ENCODE measurements at regions of chr12 and their contacts with region 1.

Region 1: GRCh38 chr12:14167005-14167628 is 185.7 kb upstream of the GRIN2B start:
- DNase-seq: peak; percentile 36
- ATAC-seq: no peak
- H3K4me3 ChIP-seq: no peak overlapping the region
- H3K27ac ChIP-seq: no peak overlapping the region
- H3K4me1 ChIP-seq: no peaks in the 10 kb centered on the region
- H3K27me3 ChIP-seq: no peaks in the 10 kb centered on the region
- CTCF ChIP-seq: peak; percentile 87

Region 2: DNA sequence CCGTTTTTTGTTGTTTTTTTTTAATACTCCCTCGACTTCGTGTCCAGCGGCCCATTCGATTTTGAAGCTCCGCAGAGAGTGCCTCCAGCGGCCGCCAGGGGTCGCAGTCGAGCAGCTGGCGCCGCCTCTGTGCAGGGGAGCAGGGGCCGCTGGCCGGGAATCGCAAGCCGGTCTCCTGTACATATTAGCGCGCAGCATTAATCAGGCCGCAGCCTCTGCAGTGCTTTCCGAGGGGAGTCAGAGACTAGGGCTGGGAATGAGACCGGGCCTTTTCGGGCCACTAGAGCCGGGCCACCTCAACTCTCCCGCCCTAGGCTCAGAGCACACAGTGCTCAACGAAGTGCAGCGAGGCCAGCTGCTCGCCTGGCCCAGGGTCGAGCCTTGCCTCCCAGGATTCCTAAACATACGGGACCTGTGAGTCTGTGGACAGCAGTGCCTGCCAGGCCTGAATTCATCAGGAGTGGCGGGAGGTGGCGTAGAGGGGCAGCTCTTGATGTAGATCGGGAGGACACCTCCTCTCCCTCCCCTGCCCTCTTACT is 888.8 kb before region 1 on chr12:
- CTCF ChIA-PET with region 1: no interaction called
- POLR2A ChIA-PET with region 1: no interaction called
- in situ Hi-C with region 1: no loop called
- intact Hi-C with region 1: loop called (anchors 10 kb)
- DNase-seq: no peak
- ATAC-seq: peak; percentile 97
- H3K4me3 ChIP-seq: peak overlapping the region in 1 of 2 experiments; percentile 23; a peak in 1 of 4 replicates
- H3K27ac ChIP-seq: no peak overlapping the region
- H3K4me1 ChIP-seq: peaks cover 3% of the 10 kb centered on the region; the same call in 1 of the 2 replicates
- H3K27me3 ChIP-seq: peaks cover 3% of the 10 kb centered on the region; the same call in 1 of the 2 replicates
- CTCF ChIP-seq: peak; percentile 96

Region 3: GRCh38 chr12:13734584-13735152 is 432.4 kb before region 1 on chr12:
- CTCF ChIA-PET with region 1: no interaction called
- POLR2A ChIA-PET with region 1: no interaction called
- in situ Hi-C with region 1: no loop called
- intact Hi-C with region 1: loop called (anchors 5 kb)
- DNase-seq: no peak
- ATAC-seq: no peak
- H3K4me3 ChIP-seq: no peak overlapping the region
- H3K27ac ChIP-seq: no peak overlapping the region
- H3K4me1 ChIP-seq: no peaks in the 10 kb centered on the region
- H3K27me3 ChIP-seq: no peaks in the 10 kb centered on the region; the same call in none of the 2 replicates
- CTCF ChIP-seq: no peak

Region 4: GRCh38 chr12:13864081-13864673 is 302.9 kb before region 1 on chr12:
- CTCF ChIA-PET with region 1: no interaction called
- POLR2A ChIA-PET with region 1: no interaction called
- in situ Hi-C with region 1: no loop called
- intact Hi-C with region 1: loop called (anchors 1 kb)
- DNase-seq: peak; percentile 55
- ATAC-seq: peak; percentile 88
- H3K4me3 ChIP-seq: no peak overlapping the region
- H3K27ac ChIP-seq: no peak overlapping the region
- H3K4me1 ChIP-seq: no peaks in the 10 kb centered on the region
- H3K27me3 ChIP-seq: no peaks in the 10 kb centered on the region; the same call in 1 of the 2 replicates
- CTCF ChIP-seq: peak; percentile 87

Measured in Panc1 (cell line).